GM18951 (cell line): ENCODE measurements at regions of chr13 and their contacts with region 1.

Region 1: DNA sequence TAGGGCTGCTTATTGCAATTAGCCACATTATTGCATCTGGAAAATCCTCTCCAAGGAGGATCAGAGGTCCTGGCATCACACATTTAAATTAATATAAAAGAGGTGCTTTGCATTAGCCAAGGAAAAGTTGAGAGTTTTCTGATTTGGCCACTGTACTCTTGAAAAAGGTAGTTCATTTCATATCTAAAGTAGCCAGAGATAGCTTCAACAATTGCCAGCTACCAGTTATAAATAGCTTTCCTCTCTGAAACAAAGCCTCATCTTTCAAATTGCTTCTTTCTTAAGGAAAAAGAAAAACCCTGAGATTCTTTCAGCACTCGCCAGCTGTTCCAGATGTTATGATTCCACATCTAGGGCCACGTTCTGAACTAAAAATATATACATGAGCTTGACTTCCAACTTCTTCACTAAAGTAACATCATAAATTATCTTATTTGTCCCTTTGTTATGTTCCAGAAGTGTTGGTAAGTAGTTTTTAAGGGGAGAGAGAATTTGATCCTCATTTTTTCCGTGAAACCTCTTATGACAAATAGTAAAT is 69.6 kb downstream of the ERCC5 start:
- POLR2A ChIP-seq: no peak

Region 2: GRCh38 chr13:102642475-102642874 is 273.0 kb before region 1 on chr13:
- in situ Hi-C with region 1: no loop called
- POLR2A ChIP-seq: no peak

Region 3: DNA sequence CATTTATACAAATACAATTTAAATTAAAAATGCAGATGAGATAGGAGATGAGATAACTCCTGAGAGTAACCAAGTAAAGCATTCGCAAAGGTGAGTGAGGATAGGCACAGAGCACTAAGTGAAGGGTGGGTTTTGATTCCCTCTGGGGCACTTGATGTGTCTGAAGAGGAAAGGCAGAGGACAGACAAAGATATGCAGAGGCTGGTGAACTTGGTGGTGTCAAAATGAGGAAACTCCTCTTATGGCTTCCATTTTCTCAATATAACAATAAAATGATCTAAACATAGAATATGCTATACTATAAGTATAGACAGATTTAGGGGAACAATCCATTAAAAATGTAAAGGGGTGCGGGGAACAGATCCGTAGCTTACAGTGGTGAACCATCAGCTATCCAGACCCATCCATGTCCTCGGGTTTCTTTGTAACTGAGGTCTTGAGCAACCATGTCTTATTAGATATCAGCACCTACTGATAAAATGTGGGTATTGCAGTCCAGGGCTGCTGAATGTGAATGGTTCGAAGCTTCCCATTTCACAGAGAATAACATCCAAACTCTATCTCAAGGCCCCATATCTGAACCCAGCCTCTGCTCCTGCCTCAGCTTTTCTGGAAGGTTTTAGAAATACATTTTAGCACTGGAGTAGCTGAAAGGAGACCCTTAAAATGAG is 224.7 kb after region 1 on chr13:
- in situ Hi-C with region 1: loop called (anchors 5 kb)
- POLR2A ChIP-seq: no peak